ENCODE measurements at regions of chr14 and their contacts with region 1.

Region 1: DNA sequence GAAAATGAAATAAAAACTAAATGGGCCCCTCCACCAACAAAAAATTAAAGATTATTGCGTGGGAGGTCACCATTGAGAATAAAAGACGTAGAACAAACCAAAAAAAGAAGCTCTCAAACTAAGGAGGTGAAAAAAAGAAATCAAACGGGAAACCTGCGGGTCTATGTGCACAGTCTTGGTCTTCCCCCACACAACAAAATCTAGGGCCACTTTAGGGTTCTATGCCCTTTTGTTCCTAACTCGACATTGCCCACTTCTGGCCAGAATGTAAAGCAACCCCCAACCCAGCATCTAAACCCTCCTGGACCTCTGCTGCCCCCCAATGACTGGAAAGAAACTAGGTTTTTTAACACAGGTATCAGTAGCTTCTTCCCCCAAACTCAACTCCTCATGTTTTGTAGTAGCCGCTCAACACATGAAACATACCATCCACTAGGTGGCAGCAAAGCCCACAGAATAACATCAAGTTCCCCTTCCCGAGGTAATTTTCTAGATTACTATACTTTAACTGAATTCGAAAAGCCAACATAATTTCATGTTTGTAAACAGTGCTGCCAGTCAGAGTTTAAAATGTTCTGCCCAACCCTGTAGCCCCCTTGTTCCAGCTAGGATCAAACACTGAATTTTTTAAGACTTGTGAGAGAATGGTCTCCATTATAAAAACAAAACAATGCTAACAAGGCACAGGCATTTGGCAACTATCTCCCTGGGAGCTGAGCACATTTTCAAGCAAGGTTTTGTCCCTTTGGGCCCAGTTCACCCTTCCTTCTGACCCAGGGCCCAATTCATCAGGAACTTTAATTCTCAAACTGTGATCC is 18.7 kb downstream of the DAD1 start:
- DNase-seq: peak; percentile 71
- H3K4me3 ChIP-seq: peak overlapping the region in 1 of 2 experiments; percentile 1; a peak in 1 of 4 replicates
- H3K27ac ChIP-seq: peak overlapping the region; percentile 7 to 32; a peak in 1 of 4 replicates
- H3K4me1 ChIP-seq: peaks cover 0 to 18% of the 10 kb centered on the region in 2 experiments; a peak in 1 of 4 replicates
- H3K27me3 ChIP-seq: no peaks in the 10 kb centered on the region
- CTCF ChIP-seq: peak; percentile 89
- EP300 ChIP-seq: no peak
- RAD21 ChIP-seq: peak; percentile 87

Region 2: GRCh38 chr14:22358726-22359125 is 211.6 kb before region 1 on chr14:
- CTCF ChIA-PET with region 1: no interaction called
- POLR2A ChIA-PET with region 1: no interaction called
- DNase-seq: no peak
- H3K4me3 ChIP-seq: no peak overlapping the region
- H3K27ac ChIP-seq: no peak overlapping the region
- H3K4me1 ChIP-seq: no peaks in the 10 kb centered on the region
- H3K27me3 ChIP-seq: no peaks in the 10 kb centered on the region
- CTCF ChIP-seq: no peak
- EP300 ChIP-seq: no peak
- RAD21 ChIP-seq: no peak

Region 3: GRCh38 chr14:22539831-22540230 is 30.5 kb before region 1 on chr14:
- CTCF ChIA-PET with region 1: interaction called, 10 read pairs
- POLR2A ChIA-PET with region 1: no interaction called
- DNase-seq: no peak
- H3K4me3 ChIP-seq: no peak overlapping the region
- H3K27ac ChIP-seq: peak overlapping the region in 1 of 2 experiments; percentile 42; a peak in 1 of 4 replicates
- H3K4me1 ChIP-seq: peaks cover 0 to 42% of the 10 kb centered on the region in 2 experiments
- H3K27me3 ChIP-seq: no peaks in the 10 kb centered on the region
- CTCF ChIP-seq: no peak
- EP300 ChIP-seq: no peak
- RAD21 ChIP-seq: no peak

Region 4: GRCh38 chr14:22598099-22598899 is 28.0 kb after region 1 on chr14 and contains the start of gene ABHD4:
- CTCF ChIA-PET with region 1: interaction called, 23 read pairs
- POLR2A ChIA-PET with region 1: no interaction called
- DNase-seq: peak; percentile 89
- H3K4me3 ChIP-seq: peak within 1 kb of the TSS; percentile 89 to 93
- H3K27ac ChIP-seq: peak within 1 kb of the TSS; percentile 64 to 80
- H3K4me1 ChIP-seq: peaks cover 6 to 8% of the 10 kb centered on the region in 2 experiments; a peak in 3 of 4 replicates
- H3K27me3 ChIP-seq: no peaks in the 10 kb centered on the region; the same call in 1 of the 2 replicates
- CTCF ChIP-seq: no peak
- EP300 ChIP-seq: no peak
- RAD21 ChIP-seq: no peak
- polyA plus RNA-seq, gene ABHD4: 15.0 and 18.8 TPM in 2 replicates

Region 5: GRCh38 chr14:22664261-22664660 is 93.9 kb after region 1 on chr14:
- CTCF ChIA-PET with region 1: interaction called, 10 read pairs
- POLR2A ChIA-PET with region 1: no interaction called
- DNase-seq: no peak
- H3K4me3 ChIP-seq: no peak overlapping the region
- H3K27ac ChIP-seq: no peak overlapping the region
- H3K4me1 ChIP-seq: no peaks in the 10 kb centered on the region
- H3K27me3 ChIP-seq: peaks cover 32% of the 10 kb centered on the region; the same call in 1 of the 2 replicates
- CTCF ChIP-seq: no peak
- EP300 ChIP-seq: no peak
- RAD21 ChIP-seq: no peak

Region 6: GRCh38 chr14:22852940-22853767 is 282.8 kb after region 1 on chr14:
- CTCF ChIA-PET with region 1: interaction called, 31 read pairs
- POLR2A ChIA-PET with region 1: no interaction called
- DNase-seq: peak; percentile 85
- H3K4me3 ChIP-seq: peak overlapping the region; percentile 52 to 63
- H3K27ac ChIP-seq: no peak overlapping the region; a peak in 1 of 4 replicates
- H3K4me1 ChIP-seq: peaks cover 25 to 30% of the 10 kb centered on the region in 2 experiments
- H3K27me3 ChIP-seq: no peaks in the 10 kb centered on the region
- CTCF ChIP-seq: peak; percentile 92
- EP300 ChIP-seq: no peak
- RAD21 ChIP-seq: peak; percentile 97